OCI-LY7 (cell line): ENCODE measurements at regions of chr3 and their contacts with region 1.

Region 1: DNA sequence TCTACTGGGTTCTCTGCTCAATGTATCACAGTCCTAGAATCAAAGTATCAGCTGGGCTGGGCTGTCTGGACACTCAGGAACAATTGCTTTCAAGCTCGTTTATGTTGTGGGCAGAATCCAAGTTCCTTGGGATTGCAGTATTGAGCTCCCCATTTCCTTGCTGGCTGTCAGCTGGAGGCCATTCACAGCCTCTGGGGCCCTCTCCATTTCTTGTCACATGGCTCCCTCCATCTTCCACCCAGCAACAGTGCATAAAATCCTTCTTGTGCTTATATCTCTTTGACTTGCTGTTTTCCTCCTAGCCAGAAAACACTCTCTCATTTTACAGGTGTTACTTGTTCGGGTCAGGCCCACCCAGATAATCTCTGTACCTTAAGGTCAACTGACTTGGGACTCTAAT is 363.5 kb downstream of the IGSF11 start:
- DNase-seq: no peak
- H3K4me3 ChIP-seq: no peak overlapping the region
- H3K27ac ChIP-seq: no peak overlapping the region
- H3K4me1 ChIP-seq: no peaks in the 10 kb centered on the region
- CTCF ChIP-seq: no peak

Region 2: DNA sequence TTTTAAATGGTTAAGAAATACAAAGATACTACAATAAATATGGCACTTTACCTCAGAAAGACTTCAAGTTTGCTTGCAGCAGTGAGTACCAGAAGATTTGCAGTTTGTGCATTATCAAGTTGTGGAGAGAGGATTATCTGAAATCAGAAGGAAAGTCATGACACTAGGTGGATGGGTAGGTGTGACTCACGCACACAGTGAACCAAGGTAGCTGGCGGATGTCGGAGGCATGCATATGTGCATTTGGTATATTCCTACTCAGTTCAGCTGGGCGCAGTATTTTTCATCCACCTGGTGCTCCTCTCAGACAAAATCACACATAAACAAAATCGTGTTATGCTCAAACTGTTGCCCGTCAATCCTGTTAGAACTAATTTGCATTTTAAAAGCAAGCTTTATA is 12.4 kb after region 1 on chr3:
- CTCF ChIA-PET with region 1: no interaction called
- POLR2A ChIA-PET with region 1: interaction called, 4 read pairs
- intact Hi-C with region 1: loop called (anchors 1 kb)
- DNase-seq: no peak
- H3K4me3 ChIP-seq: no peak overlapping the region
- H3K27ac ChIP-seq: no peak overlapping the region
- H3K4me1 ChIP-seq: no peaks in the 10 kb centered on the region
- CTCF ChIP-seq: no peak